ENCODE measurements at regions of chr22 and their contacts with region 1.

Region 1: GRCh38 chr22:29635734-29636357 is 32.4 kb downstream of the NF2 start:
- DNase-seq: peak; percentile 53 to 70 (median 69)
- H3K4me3 ChIP-seq: no peak overlapping the region
- H3K27ac ChIP-seq: no peak overlapping the region
- H3K4me1 ChIP-seq: peaks cover 0 to 15% (median 11%) of the 10 kb centered on the region in 4 experiments
- H3K27me3 ChIP-seq: no peaks in the 10 kb centered on the region

Region 2: DNA sequence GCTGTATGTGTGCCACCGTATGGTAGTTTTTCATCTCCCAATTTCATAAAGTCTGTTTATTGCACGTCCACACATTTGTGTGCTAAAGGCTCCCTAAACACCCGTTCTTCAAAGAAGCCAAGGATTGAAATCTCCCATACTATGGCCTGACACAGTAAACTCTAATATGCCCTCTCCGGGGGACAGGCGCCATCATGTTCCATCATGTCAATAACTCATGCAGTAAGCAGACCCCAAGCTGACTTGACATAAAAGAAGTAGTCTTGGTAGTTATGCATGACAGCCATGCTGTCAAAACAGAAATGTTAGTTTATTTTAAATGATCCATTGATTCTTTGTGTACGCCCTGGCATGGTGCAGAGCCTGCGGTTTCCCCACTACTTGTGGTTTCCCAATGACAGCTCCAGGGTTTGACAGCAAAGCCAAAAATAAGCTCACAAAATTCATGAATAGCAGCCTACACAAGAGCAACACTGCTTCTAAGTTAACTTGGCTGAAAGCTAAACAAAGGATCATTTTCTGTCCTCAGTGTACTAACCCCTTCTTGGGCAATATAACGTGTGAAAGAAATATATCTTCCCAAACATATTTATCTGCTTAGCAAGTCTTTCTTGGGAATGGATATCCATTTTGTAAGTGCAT is 27.5 kb after region 1 on chr22:
- CTCF ChIA-PET with region 1: interaction called, 11 read pairs
- POLR2A ChIA-PET with region 1: no interaction called
- DNase-seq: peak in 2 of 3 donors; percentile 22 to 37
- H3K4me3 ChIP-seq: no peak overlapping the region
- H3K27ac ChIP-seq: no peak overlapping the region
- H3K4me1 ChIP-seq: peaks cover 5 to 13% (median 10%) of the 10 kb centered on the region in 4 experiments
- H3K27me3 ChIP-seq: no peaks in the 10 kb centered on the region

Measured in common myeloid progenitor, CD34-positive (primary cell).